H1 (cell line): ENCODE measurements at regions of chr11 and their contacts with region 1.

Region 1: GRCh38 chr11:47437746-47438418 is 11.1 kb downstream of the RAPSN start:
- DNase-seq: no peak
- H3K4me3 ChIP-seq: no peak overlapping the region
- H3K27ac ChIP-seq: no peak overlapping the region
- H3K4me1 ChIP-seq: no peaks in the 10 kb centered on the region
- H3K27me3 ChIP-seq: no peaks in the 10 kb centered on the region
- CTCF ChIP-seq: no peak
- EP300 ChIP-seq: no peak
- POLR2A ChIP-seq: no peak
- RAD21 ChIP-seq: no peak

Region 2: GRCh38 chr11:47384498-47384897 is 53.4 kb before region 1 on chr11:
- CTCF ChIA-PET with region 1: no interaction called
- POLR2A ChIA-PET with region 1: no interaction called
- DNase-seq: no peak
- H3K4me3 ChIP-seq: no peak overlapping the region
- H3K27ac ChIP-seq: no peak overlapping the region
- H3K4me1 ChIP-seq: no peaks in the 10 kb centered on the region; a peak in 1 of 7 replicates
- H3K27me3 ChIP-seq: no peaks in the 10 kb centered on the region
- CTCF ChIP-seq: no peak
- EP300 ChIP-seq: no peak
- POLR2A ChIP-seq: no peak
- RAD21 ChIP-seq: no peak

Region 3: DNA sequence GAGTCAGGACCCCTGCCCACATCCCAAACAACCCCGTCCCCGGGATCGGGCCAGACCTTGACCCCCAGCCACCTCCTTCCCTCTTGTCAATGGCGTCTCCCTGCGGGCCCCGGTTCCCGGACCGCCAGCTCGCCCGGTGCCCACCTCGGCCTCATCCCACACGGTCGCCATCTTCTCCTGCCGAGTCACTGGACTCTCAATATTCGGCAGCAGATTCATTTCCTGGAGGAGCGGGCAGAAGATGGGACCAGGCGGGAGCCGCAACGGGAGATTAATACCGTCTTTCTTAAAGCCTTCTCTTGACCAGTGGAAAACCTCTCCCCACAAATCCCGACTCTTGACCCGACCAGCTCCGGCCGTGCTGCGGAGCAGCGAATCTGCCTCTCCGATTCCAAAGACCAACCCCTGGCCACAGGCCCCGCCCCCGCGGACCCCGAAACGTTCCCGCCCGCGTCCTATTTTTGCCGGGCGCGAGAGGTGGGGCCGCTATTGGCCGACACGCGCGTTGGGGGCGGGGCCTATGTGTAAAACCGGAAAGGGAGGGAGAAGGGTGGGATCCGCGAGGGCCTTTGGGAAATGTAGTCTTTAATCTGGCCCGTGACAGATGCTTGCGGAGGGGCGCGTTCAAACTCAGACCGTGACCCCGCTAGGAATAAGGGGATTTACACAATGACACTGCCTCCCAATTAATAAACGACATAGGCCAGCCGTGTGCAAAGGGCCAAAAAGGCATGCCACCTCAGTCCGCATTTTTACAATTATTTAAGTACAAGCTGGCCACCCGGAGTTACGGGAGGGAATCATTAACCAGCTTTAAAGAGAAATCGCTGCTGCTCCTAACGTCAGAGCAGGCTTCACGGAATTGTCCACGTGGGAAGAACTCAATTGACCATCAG is 11.6 kb before region 1 on chr11 and contains the start of gene PSMC3:
- CTCF ChIA-PET with region 1: interaction called, 5 read pairs
- POLR2A ChIA-PET with region 1: interaction called, 11 read pairs
- DNase-seq: peak; percentile 81 to 98
- H3K4me3 ChIP-seq: peak within 1 kb of the TSS; percentile 87 to 99 (median 96)
- H3K27ac ChIP-seq: peak within 1 kb of the TSS; percentile 98
- H3K4me1 ChIP-seq: peaks cover 0 to 6% (median 0%) of the 10 kb centered on the region in 4 experiments; a peak in 3 of 7 replicates
- H3K27me3 ChIP-seq: no peaks in the 10 kb centered on the region
- CTCF ChIP-seq: no peak
- EP300 ChIP-seq: peak in 1 of 2 experiments; percentile 93; a peak in 1 of 3 replicates
- POLR2A ChIP-seq: peak; percentile 58 to 86
- RAD21 ChIP-seq: no peak
- total RNA-seq, gene PSMC3: 159 and 160 TPM in 2 replicates